ENCODE measurements at regions of chr3 and their contacts with region 1.

Region 1: DNA sequence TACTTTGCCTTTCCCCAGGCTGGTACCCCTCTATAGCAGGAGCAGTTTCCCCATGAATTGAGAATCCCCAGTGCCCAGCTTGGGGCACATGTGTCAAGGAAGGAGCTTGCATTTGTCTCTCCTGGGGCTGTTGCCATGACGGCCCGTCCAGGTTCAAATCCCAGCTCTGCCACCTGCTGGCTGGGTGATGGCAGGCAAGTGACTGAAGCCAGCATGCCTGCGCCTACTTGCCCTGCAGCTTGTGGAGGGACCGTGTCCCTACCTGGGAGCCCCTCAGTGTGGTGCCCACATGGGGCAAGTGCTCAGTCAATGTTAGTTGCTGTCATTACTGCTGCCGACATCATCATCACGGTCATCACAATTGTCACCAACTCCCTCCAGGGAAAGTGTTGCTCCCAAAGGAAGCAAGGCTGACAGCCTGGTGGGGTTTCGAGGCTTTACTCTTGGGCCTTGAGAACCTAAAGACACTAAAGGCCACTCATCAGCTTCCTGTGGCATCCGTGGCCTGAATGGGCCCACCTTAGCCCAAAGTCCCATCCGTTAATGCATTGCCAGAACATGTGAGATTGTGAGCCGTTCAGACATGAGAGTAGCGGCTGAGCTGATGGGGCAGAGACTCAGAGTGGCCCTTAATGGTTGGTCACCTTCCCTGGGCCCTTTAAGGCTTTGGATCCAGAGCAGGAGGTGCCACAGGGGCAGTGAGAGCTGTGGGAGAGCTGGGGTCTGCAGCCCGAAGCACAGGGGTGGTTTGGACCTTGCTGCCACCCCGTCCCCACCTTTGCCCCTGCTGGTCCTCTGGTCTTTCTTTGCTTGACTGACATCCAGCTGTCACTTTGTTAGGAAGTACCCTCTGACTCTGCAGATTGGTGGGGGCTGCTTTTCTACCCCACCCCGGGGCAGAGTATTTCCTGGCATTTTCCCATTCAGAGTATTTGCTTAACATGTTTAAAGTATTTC is 144.3 kb downstream of the DNAJB8 start:
- DNase-seq: peak; percentile 72

Region 2: GRCh38 chr3:128095222-128095703 is 227.1 kb before region 1 on chr3:
- intact Hi-C with region 1: loop called (anchors 10 kb)
- DNase-seq: peak; percentile 87

Region 3: DNA sequence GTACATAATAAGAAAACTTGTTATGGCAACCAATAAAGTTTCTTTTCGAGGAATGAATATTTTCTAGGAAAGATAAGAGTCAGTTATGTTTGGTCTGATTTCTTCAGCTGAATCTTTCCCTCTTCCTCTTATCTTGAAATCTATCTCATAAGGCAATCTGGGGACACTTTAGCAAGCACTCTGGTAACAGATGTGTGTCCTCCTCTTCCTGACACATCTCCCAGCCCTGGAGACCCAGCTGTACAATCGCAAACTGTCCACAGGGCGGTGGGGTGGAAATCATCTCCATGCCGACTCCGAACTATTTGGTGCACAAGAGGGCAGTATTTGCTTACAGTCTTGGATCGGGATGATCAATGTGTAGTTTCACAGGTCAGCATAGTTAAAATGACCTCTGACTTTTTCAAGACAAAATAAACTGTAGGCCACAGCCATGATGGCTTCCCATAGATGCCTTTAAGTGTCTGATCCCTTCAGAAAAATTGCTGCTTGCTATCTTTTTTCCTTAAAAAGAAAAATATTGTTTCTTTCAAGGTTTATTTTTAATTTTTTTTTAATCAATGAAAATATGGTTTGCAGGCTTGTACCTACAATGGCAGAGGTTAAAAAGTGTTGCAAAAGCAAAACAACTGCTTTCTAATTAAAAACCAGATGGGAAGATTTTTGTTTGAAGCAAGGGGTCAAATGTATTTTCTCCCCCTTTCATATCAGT is 151.4 kb before region 1 on chr3:
- intact Hi-C with region 1: loop called (anchors 5 kb)
- DNase-seq: no peak

Region 4: DNA sequence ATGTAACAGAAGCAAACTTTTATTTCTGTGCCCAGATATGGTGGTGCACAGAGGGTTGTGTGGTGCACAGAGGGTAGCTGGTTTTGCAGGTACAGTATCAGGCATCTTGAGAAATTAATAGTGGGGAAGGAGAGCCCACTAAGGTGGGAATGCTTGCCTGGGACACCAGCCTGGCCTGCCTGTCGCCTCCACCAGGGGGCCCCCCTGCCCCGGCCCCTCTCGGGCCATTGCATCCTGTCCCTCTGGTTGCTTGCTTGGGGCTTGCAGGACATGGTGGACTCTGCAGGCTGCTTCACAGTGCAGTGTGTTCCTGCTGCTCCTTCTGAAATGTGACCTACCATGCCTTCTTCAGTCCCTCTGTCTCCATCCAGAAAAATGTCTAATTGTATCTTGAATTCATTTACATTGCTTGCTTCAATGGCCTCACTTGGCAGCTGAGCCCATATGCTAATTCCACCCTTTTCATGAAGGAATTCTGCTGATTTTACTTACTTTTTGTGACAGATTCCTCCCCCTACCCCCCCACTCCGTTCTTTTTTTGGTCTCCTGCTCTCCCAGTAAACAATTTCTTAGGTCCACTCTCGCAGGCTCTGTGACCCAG is 95.4 kb before region 1 on chr3:
- intact Hi-C with region 1: loop called (anchors 5 kb)
- DNase-seq: no peak

Measured in cardiac septum (tissue), 1 donor.